B cell (primary cell): ENCODE measurements at regions of chr15 and their contacts with region 1.

Region 1: GRCh38 chr15:58933281-58934113 is at the start of gene SLTM:
- DNase-seq: peak; percentile 98
- ATAC-seq: peak; percentile 91
- H3K4me3 ChIP-seq: peak within 1 kb of the TSS; percentile 80 to 97 (median 90)
- H3K4me3 Mint-ChIP-seq: peak within 1 kb of the TSS; percentile 95
- H3K27ac ChIP-seq: peak within 1 kb of the TSS; percentile 97 to 98
- H3K27ac Mint-ChIP-seq: peak within 1 kb of the TSS; percentile 97
- H3K4me1 ChIP-seq: peaks cover 19 to 20% of the 10 kb centered on the region in 2 donors
- H3K4me1 Mint-ChIP-seq: peaks cover 29% of the 10 kb centered on the region
- H3K27me3 ChIP-seq: no peaks in the 10 kb centered on the region
- H3K27me3 Mint-ChIP-seq: no peaks in the 10 kb centered on the region
- CTCF ChIP-seq: peak; percentile 42
- total RNA-seq, gene SLTM: 183 and 188 TPM in 2 replicates

Region 2: DNA sequence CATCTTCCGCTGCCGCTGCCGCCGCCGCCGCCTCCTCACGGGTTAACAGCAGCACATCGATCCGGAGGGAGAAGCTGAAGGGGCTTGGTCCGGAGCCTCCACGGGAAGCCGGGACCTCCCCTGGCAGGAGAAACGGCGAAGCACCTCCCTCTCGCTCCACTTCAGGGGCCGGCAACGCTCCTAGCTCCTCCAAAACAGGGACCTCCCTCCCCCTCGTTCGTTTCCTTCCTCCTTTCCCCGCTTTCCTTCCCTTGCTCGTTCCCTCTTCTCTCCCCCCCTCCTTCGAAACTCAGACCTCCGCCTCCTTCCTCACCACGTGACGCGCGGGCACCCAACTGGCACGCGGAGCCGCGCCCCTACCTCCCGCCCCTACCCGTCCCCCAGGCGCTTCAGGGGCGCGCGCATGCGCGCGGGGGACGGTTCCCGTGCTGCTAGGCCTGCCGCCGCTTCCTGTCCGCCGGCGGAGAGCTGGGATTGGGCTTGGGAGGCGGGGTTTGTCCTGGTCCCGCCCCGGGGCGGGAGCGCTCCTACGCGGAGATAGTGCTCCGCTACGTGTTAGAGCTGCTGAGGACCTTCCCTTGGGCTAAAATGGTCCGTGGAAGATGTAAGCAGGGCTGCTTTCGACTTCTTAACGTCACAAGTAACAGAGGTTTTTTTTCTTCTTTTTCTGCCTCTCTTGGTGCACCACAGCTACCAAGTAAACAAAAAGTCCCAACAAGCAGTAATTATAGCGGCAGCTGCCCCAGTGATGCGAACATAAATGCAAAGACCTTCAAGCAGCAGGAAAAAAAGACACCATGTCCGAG is 183.8 kb before region 1 on chr15 and contains the start of gene ADAM10:
- CTCF ChIA-PET with region 1: interaction called, 3 read pairs
- POLR2A ChIA-PET with region 1: interaction called, 5 read pairs
- intact Hi-C with region 1: loop called (anchors 1 kb)
- DNase-seq: peak; percentile 97
- ATAC-seq: peak; percentile 88
- H3K4me3 ChIP-seq: peak within 1 kb of the TSS; percentile 88 to 99 (median 99)
- H3K4me3 Mint-ChIP-seq: peak within 1 kb of the TSS; percentile 99
- H3K27ac ChIP-seq: peak within 1 kb of the TSS; percentile 86 to 92
- H3K27ac Mint-ChIP-seq: peak within 1 kb of the TSS; percentile 97
- H3K4me1 ChIP-seq: peaks cover 12 to 27% of the 10 kb centered on the region in 2 donors
- H3K4me1 Mint-ChIP-seq: peaks cover 35% of the 10 kb centered on the region
- H3K27me3 ChIP-seq: no peaks in the 10 kb centered on the region
- H3K27me3 Mint-ChIP-seq: no peaks in the 10 kb centered on the region
- CTCF ChIP-seq: no peak
- total RNA-seq, gene ADAM10: 138 and 143 TPM in 2 replicates

Region 3: DNA sequence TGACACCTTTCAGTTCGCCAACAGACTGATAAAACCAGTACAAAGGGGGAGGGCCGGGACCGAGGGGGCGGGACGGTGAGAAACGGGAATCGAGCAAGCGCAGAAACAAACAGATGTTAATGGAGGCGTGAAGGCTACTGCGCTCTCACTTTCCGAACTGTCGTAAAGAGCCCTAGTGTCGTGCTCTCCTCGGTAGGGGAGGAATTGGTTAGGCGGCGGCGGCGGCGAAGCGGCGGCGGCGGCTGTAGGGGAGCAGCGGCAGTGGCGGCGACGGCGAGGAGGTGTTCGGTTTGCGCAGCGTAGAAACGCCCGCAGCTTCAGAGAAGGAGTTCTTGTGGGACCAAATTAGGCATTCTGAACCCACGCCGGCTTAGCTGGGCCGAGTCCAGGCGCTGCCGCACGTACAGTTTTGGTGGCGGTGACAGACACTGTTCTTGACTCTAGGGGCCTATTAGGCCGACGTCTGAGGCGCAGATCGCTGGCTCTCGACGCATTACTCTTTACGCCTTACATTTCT is 54.0 kb after region 1 on chr15 and contains the start of gene RNF111:
- CTCF ChIA-PET with region 1: interaction called, 3 read pairs
- POLR2A ChIA-PET with region 1: no interaction called
- intact Hi-C with region 1: loop called (anchors 1 kb)
- DNase-seq: peak; percentile 95
- ATAC-seq: peak; percentile 93
- H3K4me3 ChIP-seq: peak within 1 kb of the TSS; percentile 76 to 100 (median 88)
- H3K4me3 Mint-ChIP-seq: peak within 1 kb of the TSS; percentile 88
- H3K27ac ChIP-seq: peak within 1 kb of the TSS; percentile 71 to 77
- H3K27ac Mint-ChIP-seq: peak within 1 kb of the TSS; percentile 92
- H3K4me1 ChIP-seq: peaks cover 12 to 16% of the 10 kb centered on the region in 2 donors
- H3K4me1 Mint-ChIP-seq: peaks cover 41% of the 10 kb centered on the region
- H3K27me3 ChIP-seq: no peaks in the 10 kb centered on the region
- H3K27me3 Mint-ChIP-seq: no peaks in the 10 kb centered on the region
- CTCF ChIP-seq: no peak
- total RNA-seq, gene RNF111: 72.3 and 82.1 TPM in 2 replicates

Region 4: GRCh38 chr15:59292442-59293151 is 359.1 kb after region 1 on chr15:
- CTCF ChIA-PET with region 1: no interaction called
- POLR2A ChIA-PET with region 1: no interaction called
- intact Hi-C with region 1: no loop called
- DNase-seq: no peak
- ATAC-seq: no peak
- H3K4me3 ChIP-seq: no peak overlapping the region
- H3K4me3 Mint-ChIP-seq: peak overlapping the region; percentile 48
- H3K27ac ChIP-seq: peak overlapping the region in 1 of 2 donors; percentile 11
- H3K27ac Mint-ChIP-seq: peak overlapping the region; percentile 46
- H3K4me1 ChIP-seq: peaks cover 44 to 56% of the 10 kb centered on the region in 2 donors
- H3K4me1 Mint-ChIP-seq: peaks cover 69% of the 10 kb centered on the region
- H3K27me3 ChIP-seq: no peaks in the 10 kb centered on the region
- H3K27me3 Mint-ChIP-seq: no peaks in the 10 kb centered on the region
- CTCF ChIP-seq: no peak

Region 5: GRCh38 chr15:59522988-59523461 is 589.5 kb after region 1 on chr15:
- CTCF ChIA-PET with region 1: no interaction called
- POLR2A ChIA-PET with region 1: no interaction called
- intact Hi-C with region 1: loop called (anchors 2 kb)
- DNase-seq: peak; percentile 75
- ATAC-seq: peak; percentile 40
- H3K4me3 ChIP-seq: peak overlapping the region in 1 of 5 experiments; percentile 11
- H3K4me3 Mint-ChIP-seq: peak overlapping the region; percentile 77
- H3K27ac ChIP-seq: peak overlapping the region; percentile 72 to 94
- H3K27ac Mint-ChIP-seq: peak overlapping the region; percentile 93
- H3K4me1 ChIP-seq: peaks cover 63 to 64% of the 10 kb centered on the region in 2 donors
- H3K4me1 Mint-ChIP-seq: peaks cover 57% of the 10 kb centered on the region
- H3K27me3 ChIP-seq: no peaks in the 10 kb centered on the region
- H3K27me3 Mint-ChIP-seq: no peaks in the 10 kb centered on the region
- CTCF ChIP-seq: no peak

Region 6: DNA sequence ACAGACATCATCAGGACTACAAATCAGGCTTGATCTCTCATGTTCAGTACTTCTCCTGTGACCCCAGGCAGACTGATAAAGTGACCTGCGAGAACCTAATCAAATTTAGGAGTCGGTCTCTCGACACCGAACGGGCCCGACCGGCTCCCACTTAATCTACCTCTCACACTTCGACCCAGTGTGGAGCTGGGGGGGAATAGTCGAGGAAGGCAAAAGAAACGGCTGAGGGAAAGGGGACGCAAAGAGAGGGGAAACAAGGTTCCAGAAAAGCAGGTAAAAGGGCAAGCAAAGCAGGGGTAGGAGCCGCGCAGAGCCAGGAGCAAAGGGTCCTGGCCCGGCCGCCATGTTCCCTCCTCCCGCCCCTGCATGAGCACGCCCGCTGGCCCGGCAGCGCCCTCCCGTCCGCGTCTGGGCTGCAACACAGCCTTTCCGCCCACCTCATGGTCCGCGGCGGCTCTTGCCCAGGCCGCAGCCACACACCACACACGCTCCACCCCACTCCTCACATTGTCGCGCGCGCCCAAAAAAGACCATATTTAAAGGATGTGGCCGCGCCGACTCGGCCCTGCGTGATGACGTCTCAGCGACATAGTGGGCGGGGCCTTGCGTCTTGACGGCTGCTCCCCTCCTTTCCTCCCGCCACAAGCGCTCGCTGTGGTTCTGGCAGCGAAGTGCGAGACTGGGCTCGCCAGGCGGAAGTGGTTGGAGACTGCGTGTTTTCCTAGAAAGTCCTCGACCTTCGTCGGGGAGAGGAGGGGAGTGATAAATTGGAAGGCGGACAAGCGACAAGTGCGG is 1545.3 kb after region 1 on chr15 and contains the start of gene ICE2:
- CTCF ChIA-PET with region 1: no interaction called
- POLR2A ChIA-PET with region 1: no interaction called
- intact Hi-C with region 1: loop called (anchors 2 kb)
- DNase-seq: peak; percentile 95
- ATAC-seq: peak; percentile 93
- H3K4me3 ChIP-seq: peak within 1 kb of the TSS; percentile 76 to 97 (median 89)
- H3K4me3 Mint-ChIP-seq: peak within 1 kb of the TSS; percentile 99
- H3K27ac ChIP-seq: peak within 1 kb of the TSS; percentile 85 to 95
- H3K27ac Mint-ChIP-seq: peak within 1 kb of the TSS; percentile 97
- H3K4me1 ChIP-seq: peaks cover 23 to 28% of the 10 kb centered on the region in 2 donors
- H3K4me1 Mint-ChIP-seq: peaks cover 52% of the 10 kb centered on the region
- H3K27me3 ChIP-seq: no peaks in the 10 kb centered on the region
- H3K27me3 Mint-ChIP-seq: no peaks in the 10 kb centered on the region
- CTCF ChIP-seq: no peak
- total RNA-seq, gene ICE2: 65.9 and 71.2 TPM in 2 replicates